Activated naive CD4-positive, alpha-beta T cell treated with anti-CD3 and anti-CD28 coated beads, Interleukin-2, amount 10 ng/mL, durations not matched to agents 7 days and 5 days (primary cell): ENCODE measurements at regions of chr9 and their contacts with region 1.

Region 1: DNA sequence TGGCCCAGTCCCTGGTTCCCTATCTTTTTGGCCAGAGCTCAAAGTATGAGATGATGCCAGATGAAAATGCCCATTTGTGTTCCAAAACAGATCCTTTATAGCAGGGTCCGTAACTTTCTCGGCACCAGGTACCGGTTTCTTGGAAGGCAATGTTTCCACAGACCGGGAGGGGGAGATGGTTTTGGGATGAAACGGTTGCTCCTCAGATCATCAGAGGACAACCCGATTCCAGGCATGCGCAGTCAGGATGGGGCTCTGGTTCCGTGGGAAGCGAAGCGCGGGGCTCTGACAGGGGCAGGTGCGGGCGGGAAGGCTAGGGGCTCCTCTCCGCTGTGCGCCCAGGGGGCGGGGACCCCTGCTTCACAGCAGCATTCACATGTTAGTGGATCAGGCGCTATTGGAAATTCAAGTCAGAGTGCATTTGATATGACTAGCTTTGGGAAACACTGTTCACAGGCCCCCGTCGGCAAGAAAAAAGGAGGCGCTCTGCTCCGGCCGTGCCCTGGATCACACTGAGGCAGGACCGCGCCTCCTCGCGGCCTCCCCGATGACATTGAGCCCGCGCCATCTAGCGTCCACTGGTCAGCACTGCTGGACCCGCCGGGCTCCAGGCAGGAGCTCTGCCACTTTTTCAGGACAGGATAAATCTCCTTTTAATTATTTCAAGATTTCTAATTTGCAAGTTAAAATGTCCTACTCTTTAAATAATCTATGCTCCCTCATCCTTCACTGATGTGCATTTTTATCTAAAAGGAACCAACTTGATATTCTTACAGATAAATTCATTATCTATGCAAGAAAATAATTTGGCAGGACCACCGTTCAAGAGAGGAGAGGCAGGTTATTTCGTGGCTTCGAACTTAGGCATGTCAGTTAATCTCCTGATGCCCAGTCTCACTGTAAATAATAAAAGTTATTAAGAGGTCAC is 190.0 kb downstream of the FANCC start:
- DNase-seq: peak; percentile 82
- H3K4me3 Mint-ChIP-seq: no peak overlapping the region
- H3K27ac Mint-ChIP-seq: no peak overlapping the region
- H3K4me1 Mint-ChIP-seq: peaks cover 2% of the 10 kb centered on the region
- H3K27me3 Mint-ChIP-seq: peaks cover 4% of the 10 kb centered on the region

Region 2: GRCh38 chr9:94668418-94668932 is 459.0 kb before region 1 on chr9:
- CTCF ChIA-PET with region 1: interaction called, 23 read pairs
- DNase-seq: no peak
- H3K4me3 Mint-ChIP-seq: no peak overlapping the region
- H3K27ac Mint-ChIP-seq: no peak overlapping the region
- H3K4me1 Mint-ChIP-seq: peaks cover 17% of the 10 kb centered on the region
- H3K27me3 Mint-ChIP-seq: peaks cover 21% of the 10 kb centered on the region

Region 3: GRCh38 chr9:94783102-94783664 is 344.3 kb before region 1 on chr9:
- CTCF ChIA-PET with region 1: interaction called, 123 read pairs
- DNase-seq: peak; percentile 65
- H3K4me3 Mint-ChIP-seq: no peak overlapping the region
- H3K27ac Mint-ChIP-seq: no peak overlapping the region
- H3K4me1 Mint-ChIP-seq: peaks cover 7% of the 10 kb centered on the region
- H3K27me3 Mint-ChIP-seq: no peaks in the 10 kb centered on the region

Region 4: GRCh38 chr9:94900222-94901018 is 227.1 kb before region 1 on chr9:
- CTCF ChIA-PET with region 1: no interaction called
- DNase-seq: no peak
- H3K4me3 Mint-ChIP-seq: no peak overlapping the region
- H3K27ac Mint-ChIP-seq: no peak overlapping the region
- H3K4me1 Mint-ChIP-seq: peaks cover 9% of the 10 kb centered on the region
- H3K27me3 Mint-ChIP-seq: no peaks in the 10 kb centered on the region

Region 5: GRCh38 chr9:95116003-95116807 is 11.3 kb before region 1 on chr9:
- CTCF ChIA-PET with region 1: interaction called, 13 read pairs
- DNase-seq: no peak
- H3K4me3 Mint-ChIP-seq: no peak overlapping the region
- H3K27ac Mint-ChIP-seq: no peak overlapping the region
- H3K4me1 Mint-ChIP-seq: no peaks in the 10 kb centered on the region
- H3K27me3 Mint-ChIP-seq: no peaks in the 10 kb centered on the region

Region 6: GRCh38 chr9:95167998-95168397 is 40.5 kb after region 1 on chr9:
- CTCF ChIA-PET with region 1: interaction called, 33 read pairs
- DNase-seq: peak; percentile 73
- H3K4me3 Mint-ChIP-seq: no peak overlapping the region
- H3K27ac Mint-ChIP-seq: no peak overlapping the region
- H3K4me1 Mint-ChIP-seq: peaks cover 14% of the 10 kb centered on the region
- H3K27me3 Mint-ChIP-seq: no peaks in the 10 kb centered on the region

Region 7: GRCh38 chr9:95268681-95269080 is 141.2 kb after region 1 on chr9:
- CTCF ChIA-PET with region 1: interaction called, 24 read pairs
- DNase-seq: peak; percentile 33
- H3K4me3 Mint-ChIP-seq: no peak overlapping the region
- H3K27ac Mint-ChIP-seq: no peak overlapping the region
- H3K4me1 Mint-ChIP-seq: peaks cover 52% of the 10 kb centered on the region
- H3K27me3 Mint-ChIP-seq: no peaks in the 10 kb centered on the region

Region 8: DNA sequence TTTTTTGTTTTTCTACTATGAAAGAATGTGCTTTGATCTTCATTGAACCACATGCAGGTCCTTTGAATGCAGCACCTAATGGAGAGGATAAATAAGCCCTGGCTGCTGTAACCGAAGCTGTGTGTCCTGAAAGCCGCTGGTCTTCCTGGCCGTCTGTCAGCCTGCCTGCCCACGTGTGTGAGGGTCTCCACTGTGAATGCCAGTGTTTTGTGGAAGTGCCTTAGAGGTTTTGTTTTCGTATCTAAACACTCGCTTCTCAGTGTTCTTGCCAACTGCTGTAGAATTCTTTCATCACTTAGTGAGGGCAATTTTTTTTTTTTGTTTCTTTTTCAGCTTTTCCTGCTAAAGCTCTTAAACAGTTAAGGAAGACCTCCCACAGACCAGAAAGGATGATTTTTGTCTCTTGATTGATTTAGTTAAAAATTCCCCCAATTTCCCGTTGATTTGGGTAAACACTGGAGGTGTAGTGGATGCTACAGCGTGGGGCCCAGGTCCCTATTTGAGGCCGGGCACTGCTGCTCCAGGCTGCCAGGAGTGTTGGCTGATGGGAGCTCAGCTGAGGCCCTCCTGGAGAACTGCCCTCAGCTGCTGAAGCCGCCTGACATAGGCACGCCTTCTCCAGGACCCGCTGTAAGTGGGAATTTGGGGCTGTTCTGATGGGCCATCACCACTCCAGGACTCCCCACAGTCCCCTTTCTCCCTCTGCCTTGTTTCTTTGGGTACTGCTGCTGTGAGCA is 418.5 kb after region 1 on chr9:
- CTCF ChIA-PET with region 1: no interaction called
- DNase-seq: no peak
- H3K4me3 Mint-ChIP-seq: no peak overlapping the region
- H3K27ac Mint-ChIP-seq: no peak overlapping the region
- H3K4me1 Mint-ChIP-seq: no peaks in the 10 kb centered on the region
- H3K27me3 Mint-ChIP-seq: peaks cover 14% of the 10 kb centered on the region